IMR-90 (cell line): ENCODE measurements at regions of chr4 and their contacts with region 1.

Region 1: GRCh38 chr4:98143001-98143899 is at the start of gene STPG2:
- DNase-seq: peak; percentile 81
- ATAC-seq: peak; percentile 100
- H3K4me3 ChIP-seq: peak within 1 kb of the TSS; percentile 82
- H3K27ac ChIP-seq: peak within 1 kb of the TSS; percentile 46; the same call in 1 of the 2 replicates
- H3K4me1 ChIP-seq: no peaks in the 10 kb centered on the region
- H3K27me3 ChIP-seq: no peaks in the 10 kb centered on the region
- CTCF ChIP-seq: peak; percentile 28
- POLR2A ChIP-seq: 0 out of 2 replicates have a peak, but pooled peaks have one; percentile 29
- RAD21 ChIP-seq: no peak
- total RNA-seq, gene STPG2: not detected in 2 replicates

Region 2: DNA sequence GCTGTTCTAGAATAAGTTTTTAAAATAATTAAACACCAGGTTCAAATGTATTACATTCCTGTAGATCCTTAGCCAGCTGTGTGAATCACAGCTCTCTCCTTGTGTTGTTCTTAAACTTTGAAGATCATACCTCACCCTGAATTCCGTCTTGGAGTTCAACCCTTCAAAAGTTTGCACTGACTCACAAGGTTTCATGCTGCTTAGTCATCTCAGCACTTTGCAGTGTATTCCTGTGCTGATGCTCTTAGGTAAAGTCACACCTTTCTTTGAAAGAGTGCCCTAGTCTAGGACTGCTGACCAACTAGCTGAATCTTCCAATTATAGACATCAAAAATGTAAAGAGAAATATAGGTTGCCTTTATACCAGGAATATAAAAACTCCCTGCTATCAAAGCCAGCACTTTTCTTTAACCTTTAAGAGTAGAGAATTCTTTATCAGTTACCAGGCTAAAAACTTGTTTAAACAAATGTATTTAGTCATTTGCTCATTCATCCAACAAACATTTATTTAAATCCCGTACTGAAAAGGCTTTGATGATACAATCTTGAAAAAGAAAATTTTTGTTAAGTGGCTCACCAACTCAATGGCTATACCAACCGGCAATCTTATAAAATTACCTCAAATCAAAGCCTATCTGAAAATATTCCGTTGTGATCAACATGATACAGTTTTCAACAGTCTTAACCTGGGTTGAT is 287.6 kb after region 1 on chr4:
- CTCF ChIA-PET with region 1: no interaction called
- POLR2A ChIA-PET with region 1: no interaction called
- dilution Hi-C with region 1: no loop called
- in situ Hi-C with region 1: no loop called
- intact Hi-C with region 1: loop called (anchors 10 kb)
- DNase-seq: peak; percentile 96
- ATAC-seq: peak; percentile 91
- H3K4me3 ChIP-seq: no peak overlapping the region
- H3K27ac ChIP-seq: peak overlapping the region; percentile 33
- H3K4me1 ChIP-seq: peaks cover 6% of the 10 kb centered on the region
- H3K27me3 ChIP-seq: no peaks in the 10 kb centered on the region
- CTCF ChIP-seq: no peak
- POLR2A ChIP-seq: no peak
- RAD21 ChIP-seq: no peak

Region 3: DNA sequence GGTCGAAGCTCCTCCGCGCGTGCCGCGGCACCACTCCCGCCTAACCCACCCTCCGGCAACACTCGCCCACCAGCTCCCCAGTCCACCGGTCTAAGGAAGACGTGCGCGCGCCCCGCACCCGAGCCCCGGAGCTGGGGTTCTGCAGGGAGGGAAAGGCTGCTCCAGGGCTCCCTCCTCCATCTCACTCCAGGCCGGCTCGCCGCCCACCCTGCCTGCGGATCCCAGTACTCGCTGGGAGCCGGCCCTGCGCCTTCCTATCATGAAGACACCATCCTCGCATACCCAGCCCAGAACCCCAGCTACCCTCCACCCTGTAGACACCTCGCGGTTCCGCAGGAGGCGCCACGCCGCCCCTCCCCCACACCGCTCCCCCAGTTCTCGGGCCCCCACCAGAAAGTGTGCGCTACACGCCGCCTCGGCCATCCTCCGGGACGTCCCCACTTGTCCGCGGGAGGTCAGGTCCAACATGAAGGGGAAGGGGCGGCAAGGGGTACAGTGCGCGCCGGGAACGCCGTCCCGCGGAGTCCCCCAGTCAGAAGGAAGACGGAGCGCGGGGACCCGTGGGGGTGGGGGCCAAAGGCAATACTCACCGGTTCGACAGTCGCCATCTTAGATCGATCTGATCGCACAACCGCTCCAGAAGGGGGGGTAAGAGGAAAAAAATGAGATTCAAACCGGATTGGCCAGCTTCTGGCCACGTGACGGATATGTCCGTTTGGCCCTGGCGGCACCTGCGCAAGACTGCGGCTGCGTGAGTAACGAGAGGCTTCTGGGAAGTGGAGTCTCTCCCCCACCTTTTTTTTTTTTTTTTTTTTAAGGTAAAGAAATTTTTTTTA is 785.5 kb after region 1 on chr4 and contains the start of gene EIF4E:
- CTCF ChIA-PET with region 1: no interaction called
- POLR2A ChIA-PET with region 1: no interaction called
- dilution Hi-C with region 1: no loop called
- in situ Hi-C with region 1: no loop called
- intact Hi-C with region 1: loop called (anchors 10 kb)
- DNase-seq: peak; percentile 99
- ATAC-seq: peak; percentile 80
- H3K4me3 ChIP-seq: peak within 1 kb of the TSS; percentile 85
- H3K27ac ChIP-seq: peak within 1 kb of the TSS; percentile 94
- H3K4me1 ChIP-seq: peaks cover 3% of the 10 kb centered on the region; the same call in 1 of the 2 replicates
- H3K27me3 ChIP-seq: no peaks in the 10 kb centered on the region
- CTCF ChIP-seq: 0 out of 2 replicates have a peak, but pooled peaks have one; percentile 20
- POLR2A ChIP-seq: 0 out of 2 replicates have a peak, but pooled peaks have one; percentile 60
- RAD21 ChIP-seq: no peak
- total RNA-seq, gene EIF4E: 113 and 288 TPM in 2 replicates

Region 4: DNA sequence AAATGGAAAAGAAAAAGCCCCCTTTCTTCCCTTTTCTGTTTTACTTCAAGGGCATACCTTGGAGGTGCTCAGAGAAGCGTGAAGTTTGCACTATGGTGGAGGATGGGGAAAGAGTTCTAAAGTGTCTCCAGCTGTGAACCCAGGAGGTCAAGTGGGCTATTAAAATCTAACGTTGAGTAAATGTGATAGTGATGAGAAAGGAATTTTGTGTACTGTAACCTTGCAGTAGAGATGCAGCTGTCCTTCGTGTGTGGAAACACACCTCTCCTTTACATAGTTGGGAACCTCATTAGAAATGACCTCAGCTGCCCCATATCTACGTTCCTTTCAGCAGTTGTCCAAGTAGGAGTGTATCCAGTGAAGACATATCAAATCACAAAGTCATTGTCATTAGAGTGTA is 918.9 kb after region 1 on chr4:
- CTCF ChIA-PET with region 1: no interaction called
- POLR2A ChIA-PET with region 1: interaction called, 18 read pairs
- dilution Hi-C with region 1: no loop called
- in situ Hi-C with region 1: no loop called
- intact Hi-C with region 1: no loop called
- DNase-seq: peak; percentile 27
- ATAC-seq: no peak
- H3K4me3 ChIP-seq: no peak overlapping the region
- H3K27ac ChIP-seq: no peak overlapping the region
- H3K4me1 ChIP-seq: peaks cover 9% of the 10 kb centered on the region
- H3K27me3 ChIP-seq: no peaks in the 10 kb centered on the region
- CTCF ChIP-seq: no peak
- POLR2A ChIP-seq: no peak
- RAD21 ChIP-seq: no peak